ENCODE measurements at regions of chr3 and their contacts with region 1.

Region 1: GRCh38 chr3:47164007-47164881 is at the start of gene SETD2:
- DNase-seq: peak; percentile 87
- H3K4me3 Mint-ChIP-seq: peak within 1 kb of the TSS; percentile 96
- H3K27ac Mint-ChIP-seq: peak within 1 kb of the TSS; percentile 98
- H3K4me1 Mint-ChIP-seq: peaks cover 43% of the 10 kb centered on the region
- H3K27me3 Mint-ChIP-seq: no peaks in the 10 kb centered on the region
- total RNA-seq, gene SETD2: 27.7 to 28.1 TPM

Region 2: DNA sequence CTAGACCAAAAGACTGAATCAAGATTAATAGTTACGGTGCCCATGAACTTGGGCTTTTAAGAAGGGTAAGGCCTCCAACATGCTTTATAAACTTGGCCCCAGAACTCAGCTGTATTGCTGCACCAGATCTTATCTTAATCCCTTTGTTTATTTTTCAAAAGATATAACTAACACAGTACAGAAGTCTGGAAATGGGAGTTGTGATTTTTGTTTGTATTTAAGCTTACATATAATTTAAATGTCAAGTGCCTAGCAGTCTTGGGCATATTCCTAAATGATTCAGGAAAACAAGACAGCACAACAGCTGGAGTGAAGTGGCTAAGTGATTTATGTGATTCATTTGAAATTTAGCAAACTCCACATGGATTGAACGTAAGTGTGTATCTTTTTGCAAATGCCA is 128.6 kb before region 1 on chr3:
- CTCF ChIA-PET with region 1: no interaction called
- intact Hi-C with region 1: loop called (anchors 5 kb)
- DNase-seq: no peak
- H3K4me3 Mint-ChIP-seq: no peak overlapping the region
- H3K27ac Mint-ChIP-seq: no peak overlapping the region
- H3K4me1 Mint-ChIP-seq: peaks cover 40% of the 10 kb centered on the region
- H3K27me3 Mint-ChIP-seq: no peaks in the 10 kb centered on the region

Region 3: GRCh38 chr3:47282424-47283192 is 118.4 kb after region 1 on chr3 and contains the starts of genes KIF9 and KLHL18:
- CTCF ChIA-PET with region 1: interaction called, 5 read pairs
- intact Hi-C with region 1: loop called (anchors 1 kb)
- DNase-seq: peak; percentile 95
- H3K4me3 Mint-ChIP-seq: peak within 1 kb of the TSS; percentile 99
- H3K27ac Mint-ChIP-seq: peak within 1 kb of the TSS; percentile 99
- H3K4me1 Mint-ChIP-seq: peaks cover 42% of the 10 kb centered on the region
- H3K27me3 Mint-ChIP-seq: no peaks in the 10 kb centered on the region
- total RNA-seq, gene KIF9: 4.5 to 4.9 TPM
- total RNA-seq, gene KLHL18: 20.7 to 21.6 TPM

Region 4: GRCh38 chr3:47380601-47381316 is 216.5 kb after region 1 on chr3 and contains the start of gene PTPN23:
- CTCF ChIA-PET with region 1: no interaction called
- intact Hi-C with region 1: loop called (anchors 1 kb)
- DNase-seq: peak; percentile 99
- H3K4me3 Mint-ChIP-seq: peak within 1 kb of the TSS; percentile 100
- H3K27ac Mint-ChIP-seq: peak within 1 kb of the TSS; percentile 98
- H3K4me1 Mint-ChIP-seq: peaks cover 37% of the 10 kb centered on the region
- H3K27me3 Mint-ChIP-seq: no peaks in the 10 kb centered on the region
- total RNA-seq, gene PTPN23: 18.7 to 21.6 TPM

Region 5: GRCh38 chr3:47781685-47782445 is 617.6 kb after region 1 on chr3 and contains the start of gene SMARCC1:
- CTCF ChIA-PET with region 1: no interaction called
- intact Hi-C with region 1: loop called (anchors 10 kb)
- DNase-seq: peak; percentile 99
- H3K4me3 Mint-ChIP-seq: peak within 1 kb of the TSS; percentile 95
- H3K27ac Mint-ChIP-seq: peak within 1 kb of the TSS; percentile 92
- H3K4me1 Mint-ChIP-seq: peaks cover 21% of the 10 kb centered on the region
- H3K27me3 Mint-ChIP-seq: no peaks in the 10 kb centered on the region
- total RNA-seq, gene SMARCC1: 82.5 to 84.5 TPM